HepG2 (cell line): ENCODE measurements at regions of chr2 and their contacts with region 1.

Region 1: GRCh38 chr2:36820942-36821605 is 124.6 kb downstream of the VIT start:
- DNase-seq: peak; percentile 55
- ATAC-seq: peak; percentile 80
- H3K4me3 ChIP-seq: no peak overlapping the region
- H3K27ac ChIP-seq: no peak overlapping the region
- H3K4me1 ChIP-seq: peaks cover 34% of the 10 kb centered on the region
- H3K27me3 ChIP-seq: peaks cover 0 to 9% of the 10 kb centered on the region in 2 experiments; a peak in 1 of 5 replicates
- CTCF ChIP-seq: no peak
- EP300 ChIP-seq: no peak
- POLR2A ChIP-seq: no peak
- RAD21 ChIP-seq: no peak

Region 2: GRCh38 chr2:36650031-36650430 is 171.0 kb before region 1 on chr2:
- CTCF ChIA-PET with region 1: no interaction called
- POLR2A ChIA-PET with region 1: no interaction called
- in situ Hi-C with region 1: no loop called
- intact Hi-C with region 1: no loop called
- DNase-seq: peak; percentile 83
- ATAC-seq: peak; percentile 92
- H3K4me3 ChIP-seq: peak overlapping the region in 1 of 3 experiments; percentile 38; a peak in 2 of 6 replicates
- H3K27ac ChIP-seq: peak overlapping the region; percentile 54
- H3K4me1 ChIP-seq: peaks cover 49% of the 10 kb centered on the region
- H3K27me3 ChIP-seq: no peaks in the 10 kb centered on the region
- CTCF ChIP-seq: no peak
- EP300 ChIP-seq: peak in 1 of 2 experiments; percentile 82; a peak in 2 of 4 replicates
- POLR2A ChIP-seq: peak in 1 of 2 experiments; percentile 41; a peak in 1 of 4 replicates
- RAD21 ChIP-seq: no peak

Region 3: DNA sequence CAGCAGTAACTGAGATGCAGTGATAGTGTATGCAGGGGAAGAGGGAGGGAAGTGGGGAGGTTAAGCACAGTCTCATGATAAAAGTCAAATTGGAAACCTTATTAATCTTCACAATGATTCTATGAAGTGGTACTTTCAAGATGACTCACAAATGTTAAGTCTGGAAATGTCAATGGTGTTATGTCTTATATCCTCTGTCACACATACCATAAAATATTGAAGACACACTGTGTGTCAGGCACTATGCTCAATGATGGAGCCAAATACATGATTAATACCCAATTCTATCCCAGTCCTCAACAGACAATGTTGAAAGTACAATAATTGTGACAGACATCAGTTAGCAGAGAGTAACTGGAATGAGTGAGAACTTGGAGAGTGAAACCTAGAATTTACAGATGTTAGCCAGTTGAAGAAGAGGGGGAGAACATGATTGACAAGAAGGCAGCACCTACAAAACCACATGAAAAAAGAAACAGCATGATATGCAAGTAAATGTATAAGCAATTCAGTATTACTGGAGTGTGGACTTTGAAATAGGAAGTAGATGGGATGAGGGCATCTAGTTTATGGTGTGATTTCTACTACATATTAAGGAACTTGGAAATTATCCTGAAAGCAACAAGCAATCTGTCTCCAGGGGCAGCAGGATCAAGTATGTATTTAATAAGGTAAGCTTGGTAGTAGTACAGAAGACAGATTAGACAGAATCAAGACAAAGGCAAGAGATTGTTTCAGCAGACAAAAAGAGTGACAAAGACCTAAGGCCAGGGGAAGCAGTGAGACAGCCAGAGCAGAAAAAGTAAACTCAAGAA is 37.7 kb after region 1 on chr2:
- CTCF ChIA-PET with region 1: no interaction called
- POLR2A ChIA-PET with region 1: no interaction called
- in situ Hi-C with region 1: no loop called
- intact Hi-C with region 1: loop called (anchors 2 kb)
- DNase-seq: peak; percentile 81
- ATAC-seq: peak; percentile 96
- H3K4me3 ChIP-seq: peak overlapping the region; percentile 24 to 36 (median 35); a peak in 5 of 6 replicates
- H3K27ac ChIP-seq: peak overlapping the region; percentile 71
- H3K4me1 ChIP-seq: peaks cover 25% of the 10 kb centered on the region
- H3K27me3 ChIP-seq: no peaks in the 10 kb centered on the region
- CTCF ChIP-seq: no peak
- EP300 ChIP-seq: peak in 1 of 2 experiments; percentile 56; a peak in 2 of 4 replicates
- POLR2A ChIP-seq: peak in 1 of 2 experiments; percentile 49; a peak in 2 of 4 replicates
- RAD21 ChIP-seq: no peak

Region 4: DNA sequence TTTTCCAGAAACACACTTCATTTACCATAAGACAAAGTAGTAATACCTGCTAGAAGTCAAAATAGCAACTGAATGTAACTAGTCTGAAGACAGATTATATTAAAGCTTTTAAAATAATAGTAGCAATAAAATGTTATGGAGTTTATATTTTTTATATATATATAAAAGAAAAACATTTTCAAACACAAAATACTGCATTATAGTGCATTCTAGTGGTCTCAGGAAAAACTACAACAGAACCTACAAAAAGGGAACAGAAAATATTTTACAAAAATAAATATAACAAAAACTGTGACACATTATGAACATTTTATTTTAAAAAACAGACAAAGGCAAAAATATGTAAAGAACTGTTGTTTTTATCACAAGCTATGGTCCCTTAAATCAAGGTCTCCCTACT is 97.2 kb after region 1 on chr2:
- CTCF ChIA-PET with region 1: no interaction called
- POLR2A ChIA-PET with region 1: no interaction called
- in situ Hi-C with region 1: no loop called
- intact Hi-C with region 1: loop called (anchors 5 kb)
- DNase-seq: no peak
- ATAC-seq: no peak
- H3K4me3 ChIP-seq: no peak overlapping the region
- H3K27ac ChIP-seq: no peak overlapping the region
- H3K4me1 ChIP-seq: peaks cover 17% of the 10 kb centered on the region
- H3K27me3 ChIP-seq: no peaks in the 10 kb centered on the region
- CTCF ChIP-seq: no peak
- EP300 ChIP-seq: no peak
- POLR2A ChIP-seq: no peak
- RAD21 ChIP-seq: no peak